H1 (cell line): ENCODE measurements at regions of chr1 and their contacts with region 1.

Region 1: DNA sequence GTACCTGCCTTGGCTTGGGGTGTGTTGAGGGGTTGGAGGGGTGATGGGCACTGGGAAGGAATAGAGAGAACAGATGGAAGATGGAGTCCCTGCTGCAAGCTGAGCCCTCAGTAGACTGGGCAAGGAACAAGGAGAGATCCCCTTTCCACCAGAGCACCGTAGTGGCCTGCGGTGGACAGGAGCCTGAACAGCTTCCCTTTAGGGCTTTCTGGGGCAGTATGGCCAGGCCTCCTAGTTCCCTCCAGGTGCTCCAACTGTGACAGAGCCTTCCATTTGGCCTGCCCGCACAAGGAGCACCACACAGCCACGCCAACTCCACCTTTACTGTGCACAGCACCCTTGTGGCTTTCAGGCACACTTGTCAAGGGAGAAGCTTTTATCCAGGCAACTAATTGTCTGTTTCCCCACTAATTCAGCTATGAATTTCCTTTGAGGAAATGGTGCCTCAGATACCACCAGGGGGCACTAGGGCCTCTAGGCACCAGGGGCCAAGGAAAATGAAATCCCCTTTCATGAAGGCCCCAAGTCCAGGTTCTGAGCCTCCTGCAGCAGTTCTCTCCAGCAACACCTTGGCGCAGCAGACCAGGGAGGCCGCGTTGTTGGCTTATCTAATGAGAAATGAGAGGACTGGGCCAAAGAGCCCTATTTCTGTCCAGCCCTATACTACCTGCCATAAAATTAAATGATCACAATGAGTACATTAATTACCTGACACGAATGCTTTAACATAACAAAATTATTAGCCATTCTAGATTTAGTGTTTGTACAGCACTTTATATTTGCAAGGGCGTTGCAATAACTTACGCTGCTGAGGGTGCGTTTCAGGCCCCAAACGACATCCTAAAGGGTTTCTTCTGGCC is 23.1 kb upstream of the ERI3 start:
- DNase-seq: peak in 1 of 2 experiments; percentile 77
- H3K4me3 ChIP-seq: no peak overlapping the region
- H3K27ac ChIP-seq: no peak overlapping the region
- H3K4me1 ChIP-seq: peaks cover 0 to 5% (median 2%) of the 10 kb centered on the region in 4 experiments; a peak in 4 of 7 replicates
- H3K27me3 ChIP-seq: no peaks in the 10 kb centered on the region
- CTCF ChIP-seq: peak; percentile 54 to 90 (median 84)
- EP300 ChIP-seq: no peak
- POLR2A ChIP-seq: no peak
- RAD21 ChIP-seq: peak; percentile 91 to 94

Region 2: GRCh38 chr1:44318097-44319088 is 59.8 kb before region 1 on chr1:
- CTCF ChIA-PET with region 1: interaction called, 20 read pairs
- POLR2A ChIA-PET with region 1: no interaction called
- DNase-seq: peak; percentile 54 to 74
- H3K4me3 ChIP-seq: no peak overlapping the region; a peak in 1 of 8 replicates
- H3K27ac ChIP-seq: no peak overlapping the region
- H3K4me1 ChIP-seq: peaks cover 7 to 18% (median 15%) of the 10 kb centered on the region in 4 experiments; a peak in 5 of 7 replicates
- H3K27me3 ChIP-seq: peaks cover 0 to 2% (median 0%) of the 10 kb centered on the region in 4 experiments; a peak in 1 of 7 replicates
- CTCF ChIP-seq: peak; percentile 45 to 82 (median 61)
- EP300 ChIP-seq: peak in 1 of 2 experiments; percentile 54; a peak in 1 of 3 replicates
- POLR2A ChIP-seq: no peak
- RAD21 ChIP-seq: peak; percentile 51; a peak in 3 of 4 replicates

Region 3: GRCh38 chr1:44390277-44390676 is 12.1 kb after region 1 on chr1:
- CTCF ChIA-PET with region 1: interaction called, 23 read pairs
- POLR2A ChIA-PET with region 1: no interaction called
- DNase-seq: no peak
- H3K4me3 ChIP-seq: no peak overlapping the region
- H3K27ac ChIP-seq: no peak overlapping the region
- H3K4me1 ChIP-seq: peaks cover 0 to 2% (median 0%) of the 10 kb centered on the region in 4 experiments; a peak in 1 of 7 replicates
- H3K27me3 ChIP-seq: no peaks in the 10 kb centered on the region
- CTCF ChIP-seq: no peak
- EP300 ChIP-seq: no peak
- POLR2A ChIP-seq: no peak
- RAD21 ChIP-seq: no peak

Region 4: DNA sequence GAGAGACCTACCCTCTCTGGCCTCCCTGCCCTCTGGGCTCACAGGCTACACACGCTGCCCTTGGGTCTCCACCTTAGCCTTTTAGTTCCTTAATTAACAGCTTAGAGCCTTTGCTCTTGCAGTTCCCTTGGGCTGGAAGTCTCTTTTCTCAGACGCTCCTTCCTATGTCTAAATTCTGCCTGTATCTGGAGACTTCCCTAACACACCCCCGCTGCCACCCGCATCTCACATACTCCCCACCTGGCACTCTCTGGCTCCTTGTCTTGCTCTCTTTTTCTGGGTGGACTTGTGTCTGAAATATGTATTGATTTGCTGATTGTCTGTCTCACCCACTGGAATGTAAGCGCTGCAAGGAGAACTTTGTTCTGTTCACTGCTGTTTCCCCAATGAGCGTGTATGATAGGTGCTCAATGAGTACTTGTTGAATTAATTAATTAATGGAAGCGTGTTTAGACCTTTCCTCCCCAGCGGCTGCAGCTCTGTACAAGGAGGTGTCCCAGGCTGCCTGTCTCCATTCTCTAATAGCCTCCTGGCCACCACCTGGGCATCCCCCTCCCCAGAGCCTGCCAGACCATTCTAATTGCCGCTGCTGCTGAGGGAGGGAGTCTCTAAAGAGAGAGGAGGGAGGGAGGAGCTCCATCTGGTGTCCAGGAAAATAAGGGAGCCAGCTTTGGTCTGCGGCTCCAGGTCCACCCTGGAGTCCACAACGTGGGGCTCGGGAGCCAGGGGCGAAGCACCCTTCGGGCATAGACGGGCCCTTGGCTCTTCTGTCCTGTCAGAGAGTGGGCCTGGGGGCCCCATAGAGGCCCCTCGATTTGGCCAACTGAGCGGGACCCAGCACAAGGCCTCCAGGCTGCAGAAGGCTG is 122.3 kb after region 1 on chr1:
- CTCF ChIA-PET with region 1: interaction called, 13 read pairs
- POLR2A ChIA-PET with region 1: no interaction called
- DNase-seq: peak in 1 of 2 experiments; percentile 80
- H3K4me3 ChIP-seq: peak overlapping the region; percentile 17 to 53 (median 40); a peak in 6 of 8 replicates
- H3K27ac ChIP-seq: no peak overlapping the region
- H3K4me1 ChIP-seq: peaks cover 11 to 29% (median 24%) of the 10 kb centered on the region in 4 experiments
- H3K27me3 ChIP-seq: peaks cover 0 to 6% (median 0%) of the 10 kb centered on the region in 4 experiments; a peak in 4 of 7 replicates
- CTCF ChIP-seq: peak; percentile 41 to 45 (median 43)
- EP300 ChIP-seq: no peak
- POLR2A ChIP-seq: no peak
- RAD21 ChIP-seq: peak; percentile 59 to 69

Region 5: GRCh38 chr1:44531785-44532566 is 153.8 kb after region 1 on chr1:
- CTCF ChIA-PET with region 1: interaction called, 13 read pairs
- POLR2A ChIA-PET with region 1: no interaction called
- DNase-seq: no peak
- H3K4me3 ChIP-seq: no peak overlapping the region
- H3K27ac ChIP-seq: no peak overlapping the region
- H3K4me1 ChIP-seq: peaks cover 15 to 26% (median 23%) of the 10 kb centered on the region in 4 experiments
- H3K27me3 ChIP-seq: no peaks in the 10 kb centered on the region
- CTCF ChIP-seq: no peak
- EP300 ChIP-seq: no peak
- POLR2A ChIP-seq: no peak
- RAD21 ChIP-seq: no peak

Region 6: DNA sequence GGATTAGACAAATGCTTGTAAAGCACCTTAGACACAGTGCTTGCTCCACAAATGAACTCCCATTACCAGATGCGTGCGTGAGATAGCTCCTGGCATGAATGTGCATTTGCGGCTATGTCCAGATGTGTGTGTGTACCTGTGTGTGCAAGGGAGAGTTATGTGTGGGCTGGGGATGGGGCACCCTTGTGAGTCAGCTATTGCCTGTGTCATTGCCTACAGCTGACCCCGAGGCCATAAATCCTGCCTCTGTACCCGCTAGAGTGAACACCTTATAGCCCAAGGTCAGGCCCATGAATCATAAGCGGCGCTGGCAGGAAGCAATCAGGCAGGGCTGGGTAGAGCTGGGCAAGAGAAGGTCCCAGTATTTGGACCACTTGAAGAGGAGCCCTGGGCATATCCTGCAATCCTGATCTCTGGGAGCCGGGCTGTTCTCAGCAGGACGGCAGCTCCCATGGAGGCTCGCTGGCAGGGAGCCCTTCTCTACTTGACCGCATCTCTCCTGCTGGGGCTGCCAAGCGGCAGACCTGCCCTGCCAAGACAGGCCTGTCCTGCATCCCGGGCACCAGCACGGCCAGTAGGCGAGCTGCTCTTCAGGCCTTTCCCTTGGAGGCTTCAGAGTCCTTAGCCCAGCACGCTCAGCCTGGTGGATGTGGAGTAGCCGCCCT is 209.8 kb after region 1 on chr1:
- CTCF ChIA-PET with region 1: interaction called, 112 read pairs
- POLR2A ChIA-PET with region 1: interaction called, 3 read pairs
- DNase-seq: no peak
- H3K4me3 ChIP-seq: no peak overlapping the region
- H3K27ac ChIP-seq: no peak overlapping the region
- H3K4me1 ChIP-seq: peaks cover 10 to 21% (median 16%) of the 10 kb centered on the region in 4 experiments
- H3K27me3 ChIP-seq: no peaks in the 10 kb centered on the region; a peak in 1 of 7 replicates
- CTCF ChIP-seq: no peak
- EP300 ChIP-seq: no peak
- POLR2A ChIP-seq: no peak
- RAD21 ChIP-seq: no peak

Region 7: DNA sequence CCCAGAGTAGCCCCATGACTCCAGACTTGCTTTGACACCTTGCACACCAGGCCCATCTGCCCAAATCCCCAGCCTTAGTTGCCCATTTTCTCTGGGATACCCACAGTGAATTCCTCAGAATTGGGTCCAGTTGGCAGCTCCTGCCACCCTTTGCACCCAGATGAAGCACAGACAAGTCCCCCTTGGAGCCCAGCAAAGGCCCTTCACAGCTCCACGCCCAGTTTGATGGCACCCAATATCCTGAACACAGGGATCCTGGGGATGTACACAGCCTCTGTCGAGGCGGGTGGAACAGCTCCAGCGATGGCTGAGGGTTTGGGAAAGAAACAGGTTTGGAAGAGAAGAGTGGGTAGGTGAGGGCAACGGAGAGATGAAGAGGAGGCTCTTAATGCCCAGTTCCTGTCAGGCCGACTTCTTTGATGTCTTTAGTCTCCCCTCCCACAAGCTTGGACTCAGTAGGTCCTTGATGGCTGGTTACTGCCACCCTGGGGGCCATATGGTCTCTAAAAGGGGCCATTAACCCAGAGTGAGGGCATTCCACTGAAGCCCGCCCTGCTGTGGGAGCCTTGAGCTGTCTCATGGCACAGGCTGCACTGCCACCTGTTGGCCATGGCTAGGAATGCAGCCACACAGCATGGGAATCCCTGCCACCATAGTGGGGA is 274.4 kb after region 1 on chr1:
- CTCF ChIA-PET with region 1: interaction called, 10 read pairs
- POLR2A ChIA-PET with region 1: no interaction called
- DNase-seq: peak; percentile 69 to 94
- H3K4me3 ChIP-seq: no peak overlapping the region
- H3K27ac ChIP-seq: 0 out of 2 replicates have a peak overlapping the region, but pooled peaks have one; percentile 20
- H3K4me1 ChIP-seq: peaks cover 0 to 17% (median 9%) of the 10 kb centered on the region in 4 experiments; a peak in 5 of 7 replicates
- H3K27me3 ChIP-seq: no peaks in the 10 kb centered on the region
- CTCF ChIP-seq: peak; percentile 94 to 100 (median 99)
- EP300 ChIP-seq: no peak
- POLR2A ChIP-seq: no peak
- RAD21 ChIP-seq: peak; percentile 93 to 95